Caco-2 (cell line): ENCODE measurements at regions of chr14 and their contacts with region 1.

Region 1: DNA sequence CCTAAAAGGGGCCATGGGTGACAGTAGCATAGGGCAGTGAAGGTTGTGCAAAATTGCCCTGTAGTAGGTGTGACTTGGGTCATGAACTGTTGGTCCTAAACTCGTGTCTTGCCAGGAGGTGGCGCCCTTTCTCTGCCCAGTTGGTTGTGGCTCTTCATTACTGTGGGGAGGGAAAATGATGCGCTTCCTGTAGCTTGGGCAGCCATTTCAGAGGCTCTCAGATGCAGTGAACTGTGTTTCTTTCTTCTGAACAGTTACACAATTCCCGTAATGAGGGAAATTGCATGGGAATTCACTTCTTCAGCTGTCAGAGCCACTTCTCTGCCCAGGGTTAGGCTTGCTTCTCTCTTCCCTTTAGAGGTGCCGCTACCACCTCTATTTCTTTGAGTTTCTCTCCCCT is 148.1 kb upstream of the NRXN3 start:
- DNase-seq: peak; percentile 59 to 67
- H3K4me3 ChIP-seq: no peak overlapping the region
- H3K4me3 Mint-ChIP-seq: no peak overlapping the region
- H3K27ac Mint-ChIP-seq: no peak overlapping the region
- H3K4me1 ChIP-seq: no peaks in the 10 kb centered on the region
- H3K4me1 Mint-ChIP-seq: no peaks in the 10 kb centered on the region
- H3K27me3 ChIP-seq: no peaks in the 10 kb centered on the region
- H3K27me3 Mint-ChIP-seq: peaks cover 22% of the 10 kb centered on the region
- CTCF ChIP-seq: peak; percentile 50 to 56

Region 2: GRCh38 chr14:77980475-77981321 is 41.4 kb before region 1 on chr14:
- CTCF ChIA-PET with region 1: no interaction called
- POLR2A ChIA-PET with region 1: no interaction called
- intact Hi-C with region 1: no loop called
- DNase-seq: peak; percentile 62 to 68
- H3K4me3 ChIP-seq: peak overlapping the region; percentile 58
- H3K4me3 Mint-ChIP-seq: peak overlapping the region; percentile 75
- H3K27ac Mint-ChIP-seq: peak overlapping the region; percentile 72
- H3K4me1 ChIP-seq: no peaks in the 10 kb centered on the region
- H3K4me1 Mint-ChIP-seq: peaks cover 6% of the 10 kb centered on the region
- H3K27me3 ChIP-seq: no peaks in the 10 kb centered on the region; the same call in none of the 2 replicates
- H3K27me3 Mint-ChIP-seq: peaks cover 19% of the 10 kb centered on the region
- CTCF ChIP-seq: no peak

Region 3: DNA sequence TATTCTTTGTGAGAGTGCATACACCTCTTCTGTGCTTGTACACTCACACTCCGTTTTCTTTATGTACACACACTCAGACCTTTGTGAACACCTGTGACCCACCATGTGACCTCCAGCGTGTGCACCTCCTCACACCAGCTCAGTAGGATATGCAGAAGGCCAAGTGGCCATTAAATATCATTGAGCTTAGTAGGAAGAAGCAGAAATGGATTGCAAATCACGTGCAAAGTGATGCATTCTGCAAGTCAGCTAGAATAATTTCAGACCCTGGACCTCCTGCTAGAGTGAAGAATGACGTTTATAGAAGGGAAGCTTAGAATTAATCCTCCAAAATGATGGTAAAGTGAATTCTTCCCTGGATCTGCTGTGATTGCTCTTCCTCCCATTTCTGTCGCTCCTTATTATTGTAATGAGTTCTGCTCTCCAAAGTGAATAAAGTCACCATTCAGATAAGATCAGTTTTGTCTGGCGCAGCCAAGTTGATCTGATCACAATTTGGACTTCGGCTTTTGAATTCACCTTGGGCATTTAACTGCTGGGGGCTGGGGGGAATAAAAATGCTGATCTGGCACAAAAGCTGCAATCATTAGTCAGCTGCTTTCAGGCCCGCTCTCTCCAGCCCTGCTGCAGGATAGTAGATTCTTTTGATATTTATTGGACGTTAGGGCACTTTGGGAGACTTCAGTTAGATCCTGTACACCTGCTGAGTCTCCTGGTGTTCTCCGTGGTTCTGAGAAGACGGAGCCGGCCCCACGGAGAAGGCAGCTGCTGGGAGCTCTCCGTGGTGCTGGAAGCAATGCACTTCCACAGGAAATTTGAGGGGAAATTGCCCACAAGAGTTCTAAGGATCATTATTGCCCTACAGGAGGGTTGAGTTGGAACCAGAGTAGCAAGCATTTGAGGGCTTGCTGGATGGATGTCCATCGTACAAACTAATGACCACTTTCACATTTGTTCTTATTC is 135.7 kb after region 1 on chr14:
- CTCF ChIA-PET with region 1: no interaction called
- POLR2A ChIA-PET with region 1: no interaction called
- intact Hi-C with region 1: loop called (anchors 10 kb)
- DNase-seq: peak in 1 of 2 experiments; percentile 50
- H3K4me3 ChIP-seq: no peak overlapping the region
- H3K4me3 Mint-ChIP-seq: no peak overlapping the region
- H3K27ac Mint-ChIP-seq: no peak overlapping the region
- H3K4me1 ChIP-seq: no peaks in the 10 kb centered on the region
- H3K4me1 Mint-ChIP-seq: no peaks in the 10 kb centered on the region
- H3K27me3 ChIP-seq: no peaks in the 10 kb centered on the region; the same call in 1 of the 2 replicates
- H3K27me3 Mint-ChIP-seq: peaks cover 12% of the 10 kb centered on the region
- CTCF ChIP-seq: no peak

Region 4: DNA sequence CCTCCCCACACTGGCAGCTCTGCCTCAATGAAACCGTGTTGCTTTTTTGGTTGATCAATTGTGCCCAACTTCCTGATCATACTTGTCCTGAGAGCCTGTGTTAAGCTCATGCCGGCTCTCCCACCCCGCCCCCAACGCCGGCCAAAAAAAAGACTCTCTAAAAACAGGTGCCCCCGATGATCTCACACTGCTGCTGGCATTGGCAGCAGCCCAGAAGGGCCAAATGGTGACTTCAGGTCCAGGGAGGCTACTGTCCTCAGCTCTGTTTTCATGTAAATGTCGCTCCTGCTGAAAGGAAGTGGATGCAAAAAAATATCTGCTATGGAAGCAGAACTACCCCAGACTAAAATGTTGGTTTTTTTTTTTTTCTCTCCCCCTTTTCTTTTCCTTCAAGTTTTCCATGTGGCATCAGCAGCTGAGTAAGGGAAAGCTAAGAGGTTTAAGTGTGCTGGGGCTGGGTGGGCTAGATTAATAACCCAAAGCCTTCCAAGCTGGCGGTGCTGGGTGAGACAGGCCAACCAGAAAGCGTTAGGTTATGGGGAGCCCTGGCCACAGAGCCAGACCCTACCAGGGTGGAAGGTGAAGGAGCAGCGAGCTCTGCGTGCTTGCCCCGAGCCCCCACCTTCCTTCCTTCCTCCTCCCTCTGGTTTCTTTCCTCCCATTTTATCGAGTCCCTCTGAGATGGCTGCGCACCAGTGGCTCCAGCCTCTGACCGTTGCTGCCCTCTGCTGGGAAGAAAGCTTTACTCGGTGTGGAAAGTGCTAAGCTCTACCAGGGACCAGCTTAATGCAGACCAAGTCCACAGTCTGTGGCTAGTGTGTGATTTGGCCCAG is 544.2 kb after region 1 on chr14:
- CTCF ChIA-PET with region 1: no interaction called
- POLR2A ChIA-PET with region 1: no interaction called
- intact Hi-C with region 1: loop called (anchors 2 kb)
- DNase-seq: peak; percentile 68 to 75
- H3K4me3 ChIP-seq: no peak overlapping the region
- H3K4me3 Mint-ChIP-seq: no peak overlapping the region
- H3K27ac Mint-ChIP-seq: no peak overlapping the region
- H3K4me1 ChIP-seq: no peaks in the 10 kb centered on the region
- H3K4me1 Mint-ChIP-seq: no peaks in the 10 kb centered on the region
- H3K27me3 ChIP-seq: no peaks in the 10 kb centered on the region
- H3K27me3 Mint-ChIP-seq: peaks cover 9% of the 10 kb centered on the region
- CTCF ChIP-seq: peak; percentile 61 to 78